Heart right ventricle (tissue), 16 donors: ENCODE measurements at regions of chr15 and their contacts with region 1.

Region 1: GRCh38 chr15:101251830-101252820 is at the start of gene CHSY1:
- DNase-seq: peak; percentile 94 to 95
- ATAC-seq: peak; percentile 89 to 92 (median 90)
- H3K4me3 ChIP-seq: peak within 1 kb of the TSS; percentile 69 to 98 (median 89)
- H3K27ac ChIP-seq: peak within 1 kb of the TSS; percentile 84 to 97 (median 92)
- H3K4me1 ChIP-seq: peaks cover 10 to 66% (median 61%) of the 10 kb centered on the region in 9 donors
- H3K27me3 ChIP-seq: no peaks in the 10 kb centered on the region
- CTCF ChIP-seq: peak in 8 of 9 donors; percentile 13 to 53 (median 26)
- total RNA-seq, gene CHSY1: 9.7 to 35.1 (median 15.7) TPM

Region 2: GRCh38 chr15:100627789-100628395 is 624.2 kb before region 1 on chr15:
- intact Hi-C with region 1: loop called in 2 of 10 experiments (anchors 10 kb)
- DNase-seq: peak in 1 of 2 donors; percentile 44
- ATAC-seq: peak in 7 of 8 donors; percentile 41 to 81 (median 78)
- H3K4me3 ChIP-seq: no peak overlapping the region
- H3K27ac ChIP-seq: no peak overlapping the region
- H3K4me1 ChIP-seq: peaks cover 0 to 12% (median 0%) of the 10 kb centered on the region in 9 donors
- H3K27me3 ChIP-seq: no peaks in the 10 kb centered on the region
- CTCF ChIP-seq: peak; percentile 69 to 89 (median 86)

Region 3: DNA sequence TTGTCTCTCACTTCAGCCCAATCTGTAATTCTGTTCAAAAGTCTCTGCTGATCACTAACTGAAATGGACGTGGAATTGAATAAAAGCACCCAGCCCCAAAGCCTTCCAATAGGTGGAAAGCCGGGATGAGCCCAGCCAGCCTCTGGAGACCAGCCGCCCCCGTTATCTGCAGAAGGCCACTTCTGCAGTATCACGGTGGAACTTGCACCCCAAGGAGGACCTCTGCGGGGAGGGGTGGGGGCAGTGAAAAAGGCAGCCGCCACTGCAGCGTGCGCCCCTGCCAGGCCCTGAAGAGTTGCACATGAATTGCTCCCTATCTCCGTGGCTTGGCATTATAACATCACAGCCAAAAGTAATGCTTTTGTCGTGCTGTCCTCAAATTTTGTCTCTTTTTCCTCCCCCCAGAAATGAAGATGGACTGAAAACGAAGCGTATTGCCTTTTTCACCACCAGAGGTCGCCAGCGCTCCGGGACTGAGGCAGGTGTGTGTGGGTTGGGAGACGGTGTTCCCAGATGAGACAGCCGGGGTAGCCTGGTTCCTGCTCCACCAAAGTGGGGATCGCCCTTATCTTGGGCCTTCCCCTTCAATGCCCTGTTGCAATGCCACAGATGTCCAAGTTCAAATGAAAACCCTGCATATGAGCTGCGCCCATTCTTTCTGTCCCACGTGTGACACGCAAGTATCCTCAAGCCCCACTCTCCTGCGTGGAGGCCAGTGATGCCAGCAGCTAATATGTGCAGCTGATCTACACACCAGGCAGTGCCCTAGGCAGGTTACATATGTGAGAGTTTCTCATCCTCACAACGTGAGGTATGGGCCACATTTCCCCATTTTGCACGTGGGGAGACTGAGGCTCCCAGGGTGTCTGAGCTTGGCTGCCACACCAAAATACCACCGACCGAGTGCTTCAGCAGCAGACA is 236.9 kb before region 1 on chr15:
- intact Hi-C with region 1: loop called in 3 of 10 experiments (anchors 1 to 5 kb)
- DNase-seq: peak; percentile 79 to 80
- ATAC-seq: peak; percentile 68 to 80 (median 78)
- H3K4me3 ChIP-seq: no peak overlapping the region
- H3K27ac ChIP-seq: no peak overlapping the region
- H3K4me1 ChIP-seq: peaks cover 0 to 27% (median 4%) of the 10 kb centered on the region in 9 donors
- H3K27me3 ChIP-seq: no peaks in the 10 kb centered on the region
- CTCF ChIP-seq: peak; percentile 81 to 93 (median 89)

Region 4: GRCh38 chr15:101121511-101122090 is 130.5 kb before region 1 on chr15:
- intact Hi-C with region 1: loop called in 7 of 10 experiments (anchors 2 to 10 kb)
- DNase-seq: peak; percentile 87
- ATAC-seq: peak; percentile 89 to 95 (median 93)
- H3K4me3 ChIP-seq: peak overlapping the region in 9 of 10 donors; percentile 13 to 50 (median 39)
- H3K27ac ChIP-seq: peak overlapping the region; percentile 5 to 94 (median 72)
- H3K4me1 ChIP-seq: peaks cover 13 to 67% (median 17%) of the 10 kb centered on the region in 9 donors
- H3K27me3 ChIP-seq: no peaks in the 10 kb centered on the region
- CTCF ChIP-seq: peak in 6 of 9 donors; percentile 39 to 67 (median 50)

Region 5: DNA sequence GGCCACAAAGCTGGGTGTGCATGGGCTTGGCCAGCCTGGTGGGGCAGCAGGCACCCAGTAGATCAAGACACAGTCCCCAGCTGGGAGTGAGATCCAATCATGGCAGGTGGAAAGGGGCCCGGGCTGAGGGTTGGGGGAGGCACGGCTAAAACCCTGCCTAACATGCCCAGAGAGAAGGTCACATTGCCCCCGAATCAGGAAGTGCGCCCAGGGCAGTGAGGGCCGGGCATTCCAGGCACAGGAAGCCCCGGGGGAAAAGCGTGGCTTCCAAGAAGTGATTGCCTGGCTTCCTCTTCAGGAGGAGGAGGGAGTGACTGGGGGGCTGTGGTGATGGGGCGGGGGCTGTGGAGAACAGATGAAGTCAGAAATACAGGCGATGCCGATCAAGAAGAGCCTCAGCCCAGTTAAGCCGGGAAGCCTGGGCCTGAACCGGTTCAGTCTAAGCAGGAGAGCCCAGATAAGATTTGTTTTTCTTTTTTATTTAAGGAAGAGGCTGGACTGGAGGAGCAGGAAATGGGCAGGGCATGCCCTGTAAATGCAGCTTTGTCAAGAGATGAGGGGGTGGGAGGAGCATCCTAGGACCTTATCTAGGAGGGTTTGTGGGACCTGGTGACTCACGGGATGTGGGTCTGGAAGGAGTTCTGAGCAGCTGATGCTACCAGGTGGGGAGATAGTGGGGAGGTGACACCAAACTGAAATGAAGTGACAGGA is 84.2 kb before region 1 on chr15:
- intact Hi-C with region 1: loop called in 2 of 10 experiments (anchors 5 kb)
- DNase-seq: peak; percentile 74 to 86
- ATAC-seq: peak; percentile 70 to 89 (median 82)
- H3K4me3 ChIP-seq: peak overlapping the region in 3 of 10 donors; percentile 16 to 18 (median 18)
- H3K27ac ChIP-seq: peak overlapping the region; percentile 60 to 96 (median 86)
- H3K4me1 ChIP-seq: peaks cover 13 to 72% (median 34%) of the 10 kb centered on the region in 9 donors
- H3K27me3 ChIP-seq: no peaks in the 10 kb centered on the region
- CTCF ChIP-seq: peak in 1 of 9 donors; percentile 7

Region 6: GRCh38 chr15:101201406-101202174 is 50.5 kb before region 1 on chr15:
- intact Hi-C with region 1: loop called in 2 of 10 experiments (anchors 5 to 10 kb)
- DNase-seq: peak; percentile 84 to 91
- ATAC-seq: peak; percentile 89 to 96 (median 94)
- H3K4me3 ChIP-seq: no peak overlapping the region
- H3K27ac ChIP-seq: peak overlapping the region; percentile 1 to 85 (median 48)
- H3K4me1 ChIP-seq: peaks cover 4 to 88% (median 52%) of the 10 kb centered on the region in 9 donors
- H3K27me3 ChIP-seq: no peaks in the 10 kb centered on the region
- CTCF ChIP-seq: no peak